PC-3 (cell line): ENCODE measurements at regions of chr4 and their contacts with region 1.

Region 1: DNA sequence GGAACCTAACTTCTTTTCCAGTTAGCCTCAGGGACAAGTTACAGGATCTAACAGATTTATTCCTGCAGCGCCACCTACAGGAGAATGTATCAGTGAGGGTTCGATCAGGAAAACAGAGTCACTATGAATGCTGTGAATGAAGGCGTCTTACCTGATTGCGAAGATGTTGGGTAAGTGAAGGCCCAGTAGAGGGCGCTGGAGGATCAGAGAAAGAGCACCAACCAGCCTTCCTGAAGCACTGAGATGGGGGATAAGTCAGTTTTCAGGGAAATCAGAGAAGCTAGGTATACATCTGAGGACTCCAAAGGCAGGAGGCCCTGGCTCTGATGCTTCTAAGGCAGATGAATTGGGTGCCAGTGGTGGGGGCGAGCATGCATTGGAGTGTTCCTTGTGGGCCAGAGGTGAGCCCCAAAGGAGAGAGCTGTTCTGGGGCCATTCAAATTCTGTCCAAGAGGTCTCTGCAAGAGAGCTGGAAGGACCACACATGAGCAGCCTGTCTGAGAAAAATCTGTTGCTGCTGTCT is 169.9 kb upstream of the AADAT start:
- DNase-seq: peak; percentile 92
- ATAC-seq: peak; percentile 88
- H3K4me3 ChIP-seq: no peak overlapping the region
- H3K27ac ChIP-seq: no peak overlapping the region
- H3K4me1 ChIP-seq: no peaks in the 10 kb centered on the region
- H3K27me3 ChIP-seq: no peaks in the 10 kb centered on the region
- CTCF ChIP-seq: peak; percentile 96

Region 2: DNA sequence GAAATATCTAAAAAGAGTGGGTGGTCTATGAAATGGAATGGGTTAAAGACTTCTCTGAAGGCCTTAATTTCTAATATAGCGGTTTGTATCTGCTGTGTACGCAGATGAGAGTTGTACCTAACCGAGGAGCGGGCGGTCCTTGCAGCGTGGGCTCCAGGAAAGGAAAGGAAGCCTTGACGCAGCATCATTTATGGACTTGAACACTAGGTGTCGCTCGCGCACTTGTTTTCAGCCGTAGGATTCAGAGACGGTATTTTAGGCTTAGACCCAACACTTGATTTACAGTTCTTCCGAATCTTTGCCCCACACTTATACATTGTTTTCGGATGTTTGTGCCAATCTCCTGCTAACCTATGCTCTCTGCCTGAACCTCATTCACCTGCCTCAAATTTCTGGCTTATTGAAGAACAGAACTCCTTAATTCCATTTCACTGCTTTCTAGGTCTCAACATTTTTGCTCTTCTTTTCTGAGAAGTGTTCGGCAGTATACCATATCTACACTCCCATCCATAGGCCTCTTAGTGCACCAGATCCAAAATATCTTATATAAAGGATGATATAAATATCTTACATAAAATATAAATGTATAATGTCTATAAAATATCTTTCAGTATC is 121.0 kb before region 1 on chr4:
- CTCF ChIA-PET with region 1: no interaction called
- POLR2A ChIA-PET with region 1: no interaction called
- intact Hi-C with region 1: loop called (anchors 5 kb)
- DNase-seq: peak; percentile 82
- ATAC-seq: peak; percentile 81
- H3K4me3 ChIP-seq: no peak overlapping the region
- H3K27ac ChIP-seq: no peak overlapping the region
- H3K4me1 ChIP-seq: peaks cover 4% of the 10 kb centered on the region; the same call in 1 of the 2 replicates
- H3K27me3 ChIP-seq: no peaks in the 10 kb centered on the region
- CTCF ChIP-seq: peak; percentile 73

Region 3: DNA sequence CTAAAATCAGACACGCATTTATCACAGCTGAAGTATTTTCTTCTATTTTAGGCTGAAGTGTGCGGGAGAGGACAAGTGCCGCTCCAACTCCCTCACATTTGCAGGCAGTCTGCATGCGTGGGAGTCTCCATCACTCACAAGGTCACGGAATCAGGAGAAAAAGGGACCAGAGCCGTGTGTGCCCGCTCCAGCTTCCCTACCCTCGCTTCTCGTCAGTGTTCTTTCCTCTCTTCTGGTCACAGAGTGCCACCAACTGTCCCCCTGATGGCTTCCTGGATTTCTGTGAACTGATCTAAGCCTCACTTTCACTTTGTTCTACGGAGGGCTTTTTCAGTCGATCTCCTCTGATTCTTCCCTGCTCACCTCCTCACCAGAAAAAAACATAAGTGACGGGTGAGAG is 237.4 kb after region 1 on chr4:
- CTCF ChIA-PET with region 1: interaction called, 9 read pairs
- POLR2A ChIA-PET with region 1: no interaction called
- intact Hi-C with region 1: loop called (anchors 1 kb)
- DNase-seq: peak; percentile 35
- ATAC-seq: peak; percentile 74
- H3K4me3 ChIP-seq: peak overlapping the region; percentile 71
- H3K27ac ChIP-seq: no peak overlapping the region
- H3K4me1 ChIP-seq: no peaks in the 10 kb centered on the region
- H3K27me3 ChIP-seq: no peaks in the 10 kb centered on the region
- CTCF ChIP-seq: no peak; the same call in 1 of the 2 replicates